Caco-2 (cell line): ENCODE measurements at regions of chr11 and their contacts with region 1.

Region 1: DNA sequence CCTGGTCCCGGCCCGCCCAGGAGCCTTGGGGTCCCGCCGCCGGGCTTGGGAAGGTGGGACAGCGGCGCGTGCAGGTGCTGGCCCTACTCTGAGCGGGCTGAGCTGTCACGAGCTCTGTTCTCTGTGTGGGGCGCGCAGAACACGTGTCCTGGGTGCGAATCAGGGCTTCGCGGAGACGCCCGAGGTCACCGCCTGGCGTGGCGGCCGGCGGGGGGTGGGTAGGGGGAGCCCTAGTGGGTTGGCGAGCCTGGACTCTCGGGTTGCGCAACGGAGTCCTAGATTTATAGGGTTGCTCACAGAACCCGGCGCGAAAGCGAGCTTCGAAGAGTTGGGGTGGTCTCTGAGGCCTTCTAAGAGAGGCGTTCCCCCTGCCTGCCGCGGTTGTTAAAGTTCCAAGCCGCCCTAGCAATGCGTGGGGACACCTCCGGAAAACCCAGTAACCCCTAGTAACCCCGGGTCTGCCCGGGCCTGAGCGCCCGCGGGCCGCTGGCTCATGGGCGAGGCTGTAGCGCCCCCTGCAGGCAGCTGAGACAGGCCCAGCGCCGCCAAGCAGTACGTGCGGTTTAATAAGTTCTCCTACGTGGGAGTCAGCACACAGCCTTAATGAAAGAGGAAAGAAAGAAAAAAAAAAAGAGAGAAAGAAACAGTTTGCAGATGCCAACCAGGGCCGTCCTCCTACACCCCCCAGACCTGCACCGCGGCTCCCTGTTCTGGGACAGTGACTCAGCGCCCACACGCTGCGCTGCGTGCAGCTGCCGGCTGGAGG is 2.8 kb downstream of the ADM start:
- DNase-seq: peak; percentile 83 to 90
- H3K4me3 ChIP-seq: peak overlapping the region; percentile 64
- H3K4me3 Mint-ChIP-seq: peak overlapping the region; percentile 85
- H3K27ac Mint-ChIP-seq: peak overlapping the region; percentile 81
- H3K4me1 ChIP-seq: peaks cover 28% of the 10 kb centered on the region
- H3K4me1 Mint-ChIP-seq: peaks cover 36% of the 10 kb centered on the region
- H3K27me3 ChIP-seq: no peaks in the 10 kb centered on the region
- H3K27me3 Mint-ChIP-seq: peaks cover 3% of the 10 kb centered on the region
- CTCF ChIP-seq: peak; percentile 88 to 97

Region 2: GRCh38 chr11:9861860-9862725 is 445.5 kb before region 1 on chr11:
- CTCF ChIA-PET with region 1: no interaction called
- POLR2A ChIA-PET with region 1: no interaction called
- intact Hi-C with region 1: loop called (anchors 5 kb)
- DNase-seq: peak; percentile 77 to 82
- H3K4me3 ChIP-seq: no peak overlapping the region
- H3K4me3 Mint-ChIP-seq: no peak overlapping the region
- H3K27ac Mint-ChIP-seq: no peak overlapping the region
- H3K4me1 ChIP-seq: peaks cover 60% of the 10 kb centered on the region
- H3K4me1 Mint-ChIP-seq: peaks cover 41% of the 10 kb centered on the region
- H3K27me3 ChIP-seq: no peaks in the 10 kb centered on the region
- H3K27me3 Mint-ChIP-seq: no peaks in the 10 kb centered on the region
- CTCF ChIP-seq: peak; percentile 77 to 87

Region 3: GRCh38 chr11:10293423-10294289 is 14.0 kb before region 1 on chr11 and contains the start of gene SBF2:
- CTCF ChIA-PET with region 1: interaction called, 8 read pairs
- POLR2A ChIA-PET with region 1: interaction called, 13 read pairs
- intact Hi-C with region 1: loop called (anchors 1 kb)
- DNase-seq: peak; percentile 87 to 91
- H3K4me3 ChIP-seq: peak within 1 kb of the TSS; percentile 88
- H3K4me3 Mint-ChIP-seq: peak within 1 kb of the TSS; percentile 76
- H3K27ac Mint-ChIP-seq: peak within 1 kb of the TSS; percentile 74
- H3K4me1 ChIP-seq: peaks cover 12% of the 10 kb centered on the region
- H3K4me1 Mint-ChIP-seq: peaks cover 17% of the 10 kb centered on the region
- H3K27me3 ChIP-seq: no peaks in the 10 kb centered on the region
- H3K27me3 Mint-ChIP-seq: no peaks in the 10 kb centered on the region
- CTCF ChIP-seq: no peak
- total RNA-seq, gene SBF2: 56.5 and 72.2 TPM in 2 replicates

Region 4: GRCh38 chr11:10351768-10352641 is 44.4 kb after region 1 on chr11:
- CTCF ChIA-PET with region 1: interaction called, 6 read pairs
- POLR2A ChIA-PET with region 1: interaction called, 16 read pairs
- intact Hi-C with region 1: loop called (anchors 5 kb)
- DNase-seq: peak in 1 of 2 experiments; percentile 81
- H3K4me3 ChIP-seq: peak overlapping the region; percentile 20
- H3K4me3 Mint-ChIP-seq: peak overlapping the region; percentile 42
- H3K27ac Mint-ChIP-seq: peak overlapping the region; percentile 22
- H3K4me1 ChIP-seq: peaks cover 47% of the 10 kb centered on the region
- H3K4me1 Mint-ChIP-seq: peaks cover 14% of the 10 kb centered on the region
- H3K27me3 ChIP-seq: no peaks in the 10 kb centered on the region
- H3K27me3 Mint-ChIP-seq: no peaks in the 10 kb centered on the region
- CTCF ChIP-seq: no peak

Region 5: DNA sequence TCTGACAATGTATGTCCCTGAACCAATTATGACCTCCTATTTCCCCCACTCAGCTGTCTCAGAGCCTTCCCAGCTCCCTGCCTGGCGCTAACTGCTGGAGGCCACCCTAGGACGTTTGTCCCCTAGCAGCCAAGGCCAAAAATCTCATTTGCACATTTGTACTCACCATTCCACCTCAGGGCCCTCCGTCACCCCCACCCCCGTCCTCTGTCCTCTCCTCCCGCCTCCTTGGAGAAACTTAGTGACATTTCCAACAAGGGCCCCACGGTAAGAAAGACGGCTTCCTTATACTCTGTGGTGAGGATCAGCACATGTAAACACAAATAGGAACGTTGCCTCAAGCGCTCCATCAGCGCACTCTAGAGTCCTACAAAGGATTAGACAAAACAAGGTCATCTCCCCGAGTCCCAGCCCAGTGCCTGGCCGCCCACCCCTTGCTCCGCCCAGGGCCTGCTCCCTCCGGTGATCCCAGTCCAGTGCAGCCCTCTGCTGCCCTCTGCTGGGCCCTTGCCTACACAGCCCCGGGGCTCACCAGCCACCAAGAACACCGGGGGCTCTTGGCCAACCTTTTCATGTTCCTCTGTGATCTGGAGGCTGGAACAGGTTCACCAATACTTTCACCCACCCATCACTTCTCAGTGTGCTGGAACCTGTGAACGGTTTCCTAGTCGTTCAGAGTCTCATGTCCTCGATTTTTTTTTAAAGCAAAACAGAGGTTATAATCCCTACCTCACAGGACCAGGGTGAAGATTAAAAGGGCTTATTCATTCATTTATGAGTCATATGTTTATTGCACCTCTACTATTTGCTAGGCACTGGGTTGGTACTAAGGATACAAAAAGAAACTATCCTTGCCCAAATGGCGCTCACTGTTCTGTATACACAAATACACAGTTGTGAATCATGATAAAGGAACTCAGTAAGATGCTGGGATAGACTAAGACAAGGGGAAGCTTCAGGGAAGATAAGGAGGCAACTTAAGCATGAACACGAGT is 428.2 kb after region 1 on chr11:
- CTCF ChIA-PET with region 1: no interaction called
- POLR2A ChIA-PET with region 1: no interaction called
- intact Hi-C with region 1: loop called (anchors 5 kb)
- DNase-seq: peak; percentile 97
- H3K4me3 ChIP-seq: peak overlapping the region; percentile 6
- H3K4me3 Mint-ChIP-seq: peak overlapping the region; percentile 52
- H3K27ac Mint-ChIP-seq: peak overlapping the region; percentile 24
- H3K4me1 ChIP-seq: peaks cover 19% of the 10 kb centered on the region
- H3K4me1 Mint-ChIP-seq: peaks cover 32% of the 10 kb centered on the region
- H3K27me3 ChIP-seq: no peaks in the 10 kb centered on the region
- H3K27me3 Mint-ChIP-seq: no peaks in the 10 kb centered on the region
- CTCF ChIP-seq: peak; percentile 97 to 98